Activated T-helper 1 cell treated with anti-CD3 and anti-CD28 coated beads, Interleukin-12 subunit alpha, Interleukin-12 subunit beta, Interleukin-2, Interleukin-4 antibody, amounts not matched to agents 30 ng/mL and 10 ng/mL and 1 ng/mL, durations not matched to agents 14 hours and 24 hours and 36 hours (primary cell): ENCODE measurements at regions of chr20 and their contacts with region 1.

Region 1: GRCh38 chr20:33709398-33709797 is 10.7 kb downstream of the PXMP4 start:
- DNase-seq: no peak
- H3K4me3 Mint-ChIP-seq: no peak overlapping the region
- H3K27ac Mint-ChIP-seq: peak overlapping the region; percentile 84
- H3K4me1 Mint-ChIP-seq: peaks cover 28% of the 10 kb centered on the region
- H3K27me3 Mint-ChIP-seq: no peaks in the 10 kb centered on the region

Region 2: GRCh38 chr20:33719989-33720709 is 10.8 kb after region 1 on chr20 and contains the start of gene PXMP4:
- intact Hi-C with region 1: loop called (anchors 1 kb)
- DNase-seq: peak; percentile 88
- H3K4me3 Mint-ChIP-seq: peak within 1 kb of the TSS; percentile 85
- H3K27ac Mint-ChIP-seq: peak within 1 kb of the TSS; percentile 93
- H3K4me1 Mint-ChIP-seq: peaks cover 30% of the 10 kb centered on the region
- H3K27me3 Mint-ChIP-seq: no peaks in the 10 kb centered on the region
- total RNA-seq, gene PXMP4: 7.3 and 7.9 TPM in 2 replicates